Heart right ventricle (tissue), 16 donors: ENCODE measurements at regions of chr1 and their contacts with region 1.

Region 1: GRCh38 chr1:44120398-44120949 is 1.9 kb downstream of the KLF17 start:
- DNase-seq: no peak
- ATAC-seq: no peak
- H3K4me3 ChIP-seq: no peak overlapping the region
- H3K27ac ChIP-seq: no peak overlapping the region
- H3K4me1 ChIP-seq: no peaks in the 10 kb centered on the region
- H3K27me3 ChIP-seq: peaks cover 0 to 19% (median 3%) of the 10 kb centered on the region in 7 donors
- CTCF ChIP-seq: no peak

Region 2: DNA sequence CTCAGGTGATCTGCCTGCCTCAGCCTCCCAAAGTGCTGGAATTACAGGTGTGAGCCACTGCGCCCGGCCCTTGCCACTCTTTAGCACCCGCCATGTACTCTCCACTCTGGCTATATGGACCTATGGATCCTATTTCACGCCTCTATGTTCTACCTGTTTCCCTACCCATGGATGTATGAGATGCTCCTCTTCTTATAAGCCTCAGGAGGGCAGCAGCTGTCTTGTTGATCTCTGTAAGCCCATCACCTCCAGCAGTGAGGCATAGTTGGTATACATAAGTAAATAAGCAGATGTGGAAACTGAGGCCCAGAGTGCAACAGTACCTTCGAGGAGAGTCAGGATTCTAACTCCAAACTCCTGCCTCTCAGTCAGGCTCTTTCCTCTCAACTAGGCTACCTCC is 211.6 kb before region 1 on chr1:
- intact Hi-C with region 1: no loop called
- DNase-seq: no peak
- ATAC-seq: no peak
- H3K4me3 ChIP-seq: no peak overlapping the region
- H3K27ac ChIP-seq: no peak overlapping the region
- H3K4me1 ChIP-seq: peaks cover 0 to 6% (median 0%) of the 10 kb centered on the region in 9 donors
- H3K27me3 ChIP-seq: no peaks in the 10 kb centered on the region
- CTCF ChIP-seq: no peak

Region 3: GRCh38 chr1:44101356-44101755 is 19.1 kb before region 1 on chr1:
- intact Hi-C with region 1: loop called in 1 of 10 experiments (anchors 2 kb)
- DNase-seq: no peak
- ATAC-seq: no peak
- H3K4me3 ChIP-seq: no peak overlapping the region
- H3K27ac ChIP-seq: no peak overlapping the region
- H3K4me1 ChIP-seq: no peaks in the 10 kb centered on the region
- H3K27me3 ChIP-seq: peaks cover 0 to 23% (median 6%) of the 10 kb centered on the region in 7 donors
- CTCF ChIP-seq: no peak